Activated B cell treated with CpG ODN at 0.5 μM for 24 hours (primary cell): ENCODE measurements at regions of chr16 and their contacts with region 1.

Region 1: DNA sequence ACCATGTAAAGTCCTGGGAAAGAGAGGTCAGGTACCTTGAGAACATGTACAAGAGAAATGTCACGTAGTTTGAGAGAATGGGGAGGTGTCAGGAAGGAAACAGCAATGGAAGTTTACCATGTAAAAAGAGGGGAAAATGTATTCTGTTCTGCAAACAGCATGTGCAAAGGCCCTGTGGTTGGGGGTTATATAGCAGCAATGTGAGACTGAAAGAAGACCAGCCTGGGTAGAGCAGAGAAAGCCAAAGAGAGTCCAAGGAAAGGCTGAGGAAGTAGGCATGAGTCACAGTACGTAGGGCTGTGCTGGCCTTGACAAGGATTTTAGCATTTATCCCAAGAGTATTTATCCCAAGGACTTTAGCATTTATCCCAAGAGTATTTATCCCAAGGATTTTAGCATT is 141.3 kb upstream of the CACNG3 start:
- DNase-seq: no peak
- ATAC-seq: no peak
- H3K4me3 Mint-ChIP-seq: no peak overlapping the region
- H3K27ac Mint-ChIP-seq: no peak overlapping the region
- H3K4me1 Mint-ChIP-seq: no peaks in the 10 kb centered on the region
- H3K27me3 Mint-ChIP-seq: no peaks in the 10 kb centered on the region
- CTCF ChIP-seq: no peak

Region 2: GRCh38 chr16:24139282-24139681 is 24.4 kb after region 1 on chr16:
- CTCF ChIA-PET with region 1: no interaction called
- POLR2A ChIA-PET with region 1: no interaction called
- intact Hi-C with region 1: loop called (anchors 1 kb)
- DNase-seq: no peak
- ATAC-seq: no peak
- H3K4me3 Mint-ChIP-seq: no peak overlapping the region
- H3K27ac Mint-ChIP-seq: no peak overlapping the region
- H3K4me1 Mint-ChIP-seq: peaks cover 1% of the 10 kb centered on the region
- H3K27me3 Mint-ChIP-seq: no peaks in the 10 kb centered on the region
- CTCF ChIP-seq: no peak